Activated CD8-positive, alpha-beta memory T cell treated with anti-CD3 and anti-CD28 coated beads, Interleukin-2, amount 10 ng/mL, durations not matched to agents 7 days and 5 days (primary cell): ENCODE measurements at regions of chr6 and their contacts with region 1.

Region 1: DNA sequence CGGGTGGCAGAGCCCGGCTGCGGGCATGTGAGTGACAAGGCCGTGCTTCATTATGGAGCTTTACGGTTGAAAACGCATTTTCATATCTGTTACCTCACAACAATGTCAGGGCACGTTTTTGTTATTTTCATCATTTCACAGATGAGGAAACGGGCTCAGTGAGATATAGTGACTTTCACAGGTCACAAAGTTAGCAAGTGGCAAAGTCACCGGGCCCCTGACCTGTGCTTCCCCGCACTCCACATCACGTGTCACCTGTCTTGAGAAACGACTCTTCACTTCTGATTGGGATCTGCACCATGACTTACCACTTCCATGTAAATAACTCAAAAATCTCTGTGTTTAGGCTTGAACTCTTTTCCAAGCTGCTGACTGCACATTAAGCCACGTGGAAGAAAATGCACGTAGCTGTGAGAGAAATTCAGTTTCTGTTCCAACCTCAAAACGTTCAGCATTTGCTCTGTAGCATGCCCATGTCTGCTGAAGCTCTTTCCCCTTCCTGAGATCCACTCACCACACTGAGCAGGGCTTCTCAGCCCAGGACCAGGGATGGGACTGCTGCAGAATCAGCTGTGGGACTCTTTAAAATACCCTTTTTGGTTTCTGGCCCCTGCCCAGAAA is 107.2 kb downstream of the ARMC2 start:
- DNase-seq: no peak
- ATAC-seq: peak; percentile 49
- H3K4me3 Mint-ChIP-seq: no peak overlapping the region
- H3K27ac Mint-ChIP-seq: peak overlapping the region; percentile 13
- H3K4me1 Mint-ChIP-seq: peaks cover 25% of the 10 kb centered on the region
- H3K27me3 Mint-ChIP-seq: no peaks in the 10 kb centered on the region

Region 2: DNA sequence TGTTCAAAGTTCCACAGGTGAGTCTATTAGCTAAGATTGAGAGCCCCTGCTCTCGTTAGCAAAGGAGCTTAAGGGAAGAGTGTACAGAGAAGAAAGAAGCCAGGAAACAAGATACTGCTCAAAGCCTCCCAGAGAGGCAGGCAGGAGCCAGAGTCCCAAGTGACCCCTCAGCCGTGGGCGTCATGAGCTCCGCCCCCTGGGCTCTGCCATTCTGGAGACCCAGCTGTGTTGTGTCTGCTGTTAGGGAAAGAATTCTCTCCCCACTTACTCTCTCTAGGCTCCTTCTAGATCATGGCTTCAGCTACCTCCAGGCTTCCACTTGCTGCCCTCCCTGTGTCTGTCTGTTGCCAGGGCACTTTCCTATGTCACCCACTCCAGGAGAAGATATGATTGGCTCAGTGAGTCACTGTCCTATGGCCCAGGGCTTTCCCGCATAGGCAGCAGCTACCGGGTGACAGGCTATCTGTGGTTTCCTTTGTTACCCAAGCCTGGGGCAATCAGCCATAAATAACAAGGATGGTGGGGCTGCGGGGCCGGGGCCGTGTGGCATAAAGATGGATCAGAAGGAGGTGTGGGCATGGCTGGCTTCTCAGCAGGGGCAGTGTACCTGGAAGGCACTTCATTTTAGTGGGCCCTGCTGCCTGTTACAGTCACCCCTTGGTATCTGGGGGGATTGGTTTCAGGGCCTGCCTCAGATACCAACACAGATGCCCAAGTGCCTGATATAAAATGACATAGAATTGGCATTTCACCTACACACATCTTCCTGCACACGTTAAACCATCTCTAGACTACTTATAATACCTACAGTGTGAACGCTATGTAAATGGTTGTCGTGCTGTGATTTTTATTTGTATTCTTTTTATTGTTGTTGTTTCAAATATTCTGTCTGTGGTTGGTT is 11.7 kb after region 1 on chr6:
- CTCF ChIA-PET with region 1: interaction called, 10 read pairs
- DNase-seq: peak; percentile 47
- ATAC-seq: peak; percentile 74
- H3K4me3 Mint-ChIP-seq: no peak overlapping the region
- H3K27ac Mint-ChIP-seq: no peak overlapping the region
- H3K4me1 Mint-ChIP-seq: peaks cover 23% of the 10 kb centered on the region
- H3K27me3 Mint-ChIP-seq: no peaks in the 10 kb centered on the region

Region 3: DNA sequence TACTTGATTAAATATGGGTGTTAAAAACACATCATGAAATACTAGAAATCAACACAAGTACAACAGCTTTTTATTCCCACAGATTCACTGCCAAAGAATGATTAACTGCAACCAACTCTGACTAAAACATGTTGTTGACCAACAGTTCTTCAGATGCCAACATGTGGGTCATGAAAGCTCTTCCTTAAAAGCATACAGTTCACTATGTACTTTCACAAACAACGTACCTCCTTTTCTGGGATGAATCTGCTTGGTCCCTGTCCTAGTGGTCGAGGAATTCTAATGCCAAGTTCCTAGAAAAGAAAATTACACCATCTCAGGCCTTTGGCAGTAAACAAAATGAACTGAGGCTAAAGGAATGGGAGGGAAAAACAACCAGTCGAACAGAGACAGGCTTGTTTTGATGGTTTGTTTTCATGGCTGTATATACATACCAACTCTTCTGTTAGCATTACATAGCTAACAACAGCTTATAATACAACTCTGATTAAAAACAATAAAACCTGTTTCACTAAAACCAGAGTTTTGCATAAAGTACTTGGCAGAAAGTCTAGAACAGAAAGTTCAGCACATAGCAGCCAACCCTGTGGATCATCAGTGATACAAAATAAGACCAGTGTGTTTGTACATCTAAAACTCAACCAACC is 46.7 kb after region 1 on chr6:
- CTCF ChIA-PET with region 1: no interaction called
- DNase-seq: no peak
- ATAC-seq: no peak
- H3K4me3 Mint-ChIP-seq: no peak overlapping the region
- H3K27ac Mint-ChIP-seq: no peak overlapping the region
- H3K4me1 Mint-ChIP-seq: peaks cover 41% of the 10 kb centered on the region
- H3K27me3 Mint-ChIP-seq: no peaks in the 10 kb centered on the region